Heart right ventricle (tissue), 16 donors: ENCODE measurements at regions of chr1 and their contacts with region 1.

Region 1: GRCh38 chr1:29901624-29902325 is 665.5 kb downstream of the PTPRU start:
- DNase-seq: no peak
- ATAC-seq: peak in 3 of 8 donors; percentile 44 to 65 (median 48)
- H3K4me3 ChIP-seq: no peak overlapping the region
- H3K27ac ChIP-seq: peak overlapping the region in 3 of 10 donors; percentile 53 to 76 (median 58)
- H3K4me1 ChIP-seq: peaks cover 0 to 27% (median 6%) of the 10 kb centered on the region in 9 donors
- H3K27me3 ChIP-seq: peaks cover 0 to 3% (median 0%) of the 10 kb centered on the region in 7 donors
- CTCF ChIP-seq: no peak

Region 2: GRCh38 chr1:29793101-29793546 is 108.7 kb before region 1 on chr1:
- intact Hi-C with region 1: loop called in 1 of 10 experiments (anchors 10 kb)
- DNase-seq: peak; percentile 71 to 78
- ATAC-seq: peak; percentile 55 to 87 (median 79)
- H3K4me3 ChIP-seq: no peak overlapping the region
- H3K27ac ChIP-seq: no peak overlapping the region
- H3K4me1 ChIP-seq: no peaks in the 10 kb centered on the region
- H3K27me3 ChIP-seq: peaks cover 0 to 16% (median 0%) of the 10 kb centered on the region in 7 donors
- CTCF ChIP-seq: peak; percentile 63 to 85 (median 81)

Region 3: DNA sequence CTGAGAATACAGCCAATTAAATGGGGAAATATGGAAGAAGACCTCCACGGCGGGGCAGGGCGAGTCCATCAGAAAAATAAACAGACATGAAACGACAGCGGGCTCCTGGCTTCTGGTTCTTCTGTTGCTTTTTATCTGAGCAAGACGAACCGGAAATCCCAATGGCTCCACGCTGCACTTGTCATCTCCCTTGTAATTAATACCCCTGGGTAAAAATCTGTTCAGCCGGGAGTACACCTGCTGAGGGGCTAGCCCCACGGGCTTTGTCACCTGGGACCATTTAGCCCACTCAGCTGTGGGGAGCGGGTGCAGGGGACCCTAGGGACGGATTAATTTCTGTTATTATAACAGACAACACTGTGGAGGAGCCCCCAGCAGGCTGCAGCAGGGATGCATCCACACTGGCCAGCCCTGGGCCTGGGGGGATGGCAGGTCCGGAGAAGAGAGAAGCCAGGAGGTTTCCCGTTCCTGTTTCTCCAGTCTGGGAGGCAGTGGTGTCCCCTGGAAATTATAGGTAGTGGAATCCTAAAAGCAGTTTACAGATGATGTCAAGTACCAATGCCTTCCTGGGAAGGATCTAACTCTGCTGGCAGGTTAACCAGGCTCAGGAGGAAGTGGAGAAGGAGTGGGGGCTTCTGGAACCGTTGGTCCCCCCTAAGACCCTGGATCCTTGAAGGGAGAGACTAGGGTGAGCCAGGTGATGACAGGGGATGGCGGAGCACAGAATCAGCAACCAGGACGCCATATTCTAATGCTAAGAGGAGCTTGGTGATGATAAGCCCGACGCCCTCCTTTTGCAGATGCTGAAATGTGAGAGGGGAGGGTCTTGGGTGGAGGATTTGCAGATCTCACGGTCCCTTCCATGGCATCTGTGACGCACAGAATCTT is 99.3 kb before region 1 on chr1:
- intact Hi-C with region 1: loop called in 2 of 10 experiments (anchors 10 kb)
- DNase-seq: no peak
- ATAC-seq: no peak
- H3K4me3 ChIP-seq: no peak overlapping the region
- H3K27ac ChIP-seq: no peak overlapping the region
- H3K4me1 ChIP-seq: peaks cover 0 to 14% (median 0%) of the 10 kb centered on the region in 9 donors
- H3K27me3 ChIP-seq: peaks cover 0 to 37% (median 29%) of the 10 kb centered on the region in 7 donors
- CTCF ChIP-seq: no peak